ENCODE measurements at regions of chr10 and their contacts with region 1.

Region 1: GRCh38 chr10:94115725-94116124 is 122.0 kb downstream of the PLCE1 start:
- DNase-seq: no peak
- H3K4me3 ChIP-seq: no peak overlapping the region
- CTCF ChIP-seq: no peak

Region 2: GRCh38 chr10:94083662-94084265 is 32.0 kb before region 1 on chr10:
- in situ Hi-C with region 1: loop called (anchors 5 kb)
- DNase-seq: no peak
- H3K4me3 ChIP-seq: no peak overlapping the region
- CTCF ChIP-seq: no peak

Measured in astrocyte of the cerebellum (primary cell).